GM12878 (cell line): ENCODE measurements at regions of chrX and their contacts with region 1.

Region 1: DNA sequence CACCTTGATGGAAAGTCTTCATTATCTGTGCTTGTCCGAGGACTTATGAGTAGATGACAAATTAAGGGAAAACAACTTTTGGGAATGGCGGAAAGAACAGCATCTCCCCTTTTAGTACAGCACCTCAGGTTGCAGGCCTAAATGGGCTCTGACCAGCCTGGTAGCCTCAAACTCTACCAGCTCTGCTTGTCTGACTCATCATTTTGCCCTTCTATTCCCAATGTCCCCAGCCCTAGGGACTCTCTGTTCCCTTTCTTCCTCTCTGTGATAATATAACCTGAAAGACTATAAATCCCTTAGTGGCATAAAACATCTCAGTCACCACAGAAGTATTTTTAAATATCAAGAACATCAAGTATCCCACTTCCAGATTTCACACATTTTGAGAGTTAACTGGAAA is 121.9 kb downstream of the THOC2 start:
- DNase-seq: no peak
- ATAC-seq: no peak
- H3K4me3 ChIP-seq: no peak overlapping the region
- H3K27ac ChIP-seq: no peak overlapping the region
- H3K4me1 ChIP-seq: no peaks in the 10 kb centered on the region
- H3K27me3 ChIP-seq: no peaks in the 10 kb centered on the region
- CTCF ChIP-seq: no peak
- EP300 ChIP-seq: no peak
- POLR2A ChIP-seq: no peak
- RAD21 ChIP-seq: no peak

Region 2: DNA sequence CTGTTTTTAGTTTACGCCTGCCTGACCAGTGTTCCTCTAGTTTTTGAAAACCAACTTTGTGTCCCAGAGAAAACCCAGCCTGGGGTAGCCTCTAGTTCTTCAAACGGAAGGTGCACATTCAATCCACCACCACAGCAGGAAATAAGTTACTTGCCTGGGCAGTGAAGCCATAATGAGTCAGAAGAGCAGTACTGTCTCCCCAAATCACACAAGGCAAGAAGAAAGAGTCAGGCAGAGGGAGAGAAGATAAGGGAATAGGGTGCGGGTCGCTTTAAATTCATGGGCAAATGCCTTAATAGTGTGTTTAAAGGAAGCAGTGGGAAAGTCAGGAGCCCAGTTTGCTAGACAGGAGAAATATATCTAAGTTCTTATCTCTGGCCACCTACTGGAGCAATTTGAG is 760.6 kb before region 1 on chrX:
- CTCF ChIA-PET with region 1: no interaction called
- POLR2A ChIA-PET with region 1: no interaction called
- RAD21 ChIA-PET with region 1: no interaction called
- SMC1A ChIA-PET with region 1: no interaction called
- in situ Hi-C with region 1: no loop called
- intact Hi-C with region 1: no loop called
- DNase-seq: no peak
- ATAC-seq: peak; percentile 18; the same call in 1 of the 3 replicates
- H3K4me3 ChIP-seq: no peak overlapping the region
- H3K27ac ChIP-seq: no peak overlapping the region
- H3K4me1 ChIP-seq: no peaks in the 10 kb centered on the region
- H3K27me3 ChIP-seq: no peaks in the 10 kb centered on the region
- CTCF ChIP-seq: no peak
- EP300 ChIP-seq: no peak
- POLR2A ChIP-seq: no peak
- RAD21 ChIP-seq: no peak

Region 3: DNA sequence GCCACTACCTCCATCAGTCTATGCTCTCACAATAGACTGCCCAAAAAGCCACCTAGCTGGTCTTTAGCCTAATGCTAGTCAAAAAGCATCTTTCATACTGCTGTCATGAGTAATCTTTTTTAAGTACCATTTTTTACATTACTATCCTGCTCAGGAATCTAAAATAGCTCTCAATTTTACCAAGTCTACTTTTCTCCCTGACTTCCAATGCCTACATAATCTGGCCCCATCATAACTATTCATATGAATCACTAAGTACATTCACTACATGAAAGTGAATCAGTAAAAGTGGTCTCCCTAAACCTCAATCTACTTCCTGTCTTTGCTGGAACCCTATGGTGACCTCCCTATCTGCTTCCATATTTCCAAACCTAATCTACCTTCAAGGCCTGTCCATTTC is 16.0 kb after region 1 on chrX:
- CTCF ChIA-PET with region 1: interaction called, 3 read pairs
- POLR2A ChIA-PET with region 1: interaction called, 4 read pairs
- RAD21 ChIA-PET with region 1: no interaction called
- SMC1A ChIA-PET with region 1: interaction called, 14 read pairs
- in situ Hi-C with region 1: no loop called
- intact Hi-C with region 1: no loop called
- DNase-seq: no peak
- ATAC-seq: no peak
- H3K4me3 ChIP-seq: no peak overlapping the region
- H3K27ac ChIP-seq: no peak overlapping the region
- H3K4me1 ChIP-seq: no peaks in the 10 kb centered on the region
- H3K27me3 ChIP-seq: no peaks in the 10 kb centered on the region
- CTCF ChIP-seq: no peak
- EP300 ChIP-seq: no peak
- POLR2A ChIP-seq: no peak
- RAD21 ChIP-seq: no peak